Posterior vena cava (tissue), 2 donors: ENCODE measurements at regions of chr10 and their contacts with region 1.

Region 1: DNA sequence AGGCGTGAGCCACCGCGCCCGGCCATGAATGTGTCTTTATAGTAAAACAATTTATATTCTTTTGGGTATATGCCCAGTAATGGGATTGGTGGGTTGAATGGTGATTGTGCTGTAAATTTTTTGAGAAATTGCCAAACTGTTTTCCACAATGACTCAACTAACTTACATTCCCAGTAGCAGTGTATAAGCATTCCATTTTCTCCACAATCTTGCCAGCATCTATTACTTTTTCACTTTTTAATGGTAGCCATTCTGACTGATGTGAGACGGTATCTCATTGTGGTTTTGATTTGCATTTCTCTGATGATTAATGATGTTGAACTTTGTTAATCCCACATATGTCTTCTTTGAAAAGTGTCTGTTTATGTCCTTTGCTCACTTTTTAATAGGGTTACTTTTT is 1187.9 kb downstream of the XPNPEP1 start:
- DNase-seq: no peak

Region 2: GRCh38 chr10:107356396-107356795 is 1379.0 kb before region 1 on chr10:
- intact Hi-C with region 1: loop called in 1 of 2 experiments (anchors 5 kb)
- DNase-seq: no peak

Region 3: DNA sequence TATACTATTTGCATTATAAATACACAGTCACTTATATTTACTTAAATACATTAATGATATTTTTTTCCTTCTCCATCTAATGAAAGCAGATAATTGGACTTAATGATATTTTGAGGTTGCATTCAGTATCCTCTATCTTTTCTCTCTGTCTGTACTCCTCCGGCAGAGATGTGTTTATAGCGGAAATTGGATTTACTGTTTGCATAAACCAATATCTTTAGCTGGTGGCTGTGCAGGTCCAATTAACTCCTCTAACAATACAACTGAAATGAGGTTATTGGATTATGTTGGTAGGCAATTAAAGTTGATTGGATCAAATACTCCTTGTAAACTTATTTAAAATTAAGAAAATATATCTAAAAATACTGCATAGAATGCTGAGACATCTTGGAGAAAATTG is 526.6 kb before region 1 on chr10:
- intact Hi-C with region 1: no loop called
- DNase-seq: no peak